Activated CD8-positive, alpha-beta T cell treated with anti-CD3 and anti-CD28 coated beads for 36 hours (primary cell): ENCODE measurements at regions of chr1 and their contacts with region 1.

Region 1: DNA sequence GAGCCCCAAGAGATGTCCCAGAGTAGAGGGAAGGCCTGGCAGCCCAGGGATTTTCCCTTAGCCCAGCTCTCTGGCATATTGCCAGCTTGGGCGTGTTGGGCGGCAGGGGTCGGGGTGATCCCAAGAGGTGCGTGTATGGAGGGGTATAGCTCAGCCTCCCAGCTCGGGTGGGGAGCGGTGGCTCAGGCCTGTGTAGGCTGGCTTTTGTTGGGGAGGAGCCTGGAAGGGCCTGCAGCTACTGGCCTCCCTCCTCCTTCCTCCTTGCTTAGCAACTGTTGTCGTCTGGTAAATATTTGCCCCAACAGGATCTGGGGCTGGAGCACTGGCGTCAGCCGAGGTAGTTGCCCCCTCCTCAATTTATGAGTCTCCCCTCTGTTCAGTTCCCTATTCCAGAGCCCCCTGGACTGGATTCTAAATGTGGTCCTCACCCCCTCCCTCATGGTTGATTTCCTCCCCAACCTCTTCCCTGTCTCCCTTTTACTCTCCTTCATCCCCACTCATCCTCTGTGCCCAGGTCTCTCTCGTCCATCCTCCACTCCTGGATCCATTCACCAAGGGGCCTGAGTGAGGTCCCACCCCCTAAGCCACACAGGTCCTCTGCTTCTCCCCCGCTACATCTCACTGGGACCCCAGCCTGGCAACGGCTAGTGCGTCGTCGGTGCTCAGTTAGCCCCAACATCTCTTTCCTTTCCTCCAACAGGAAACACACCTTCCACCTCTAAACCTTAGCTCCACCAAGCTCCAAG is 10.3 kb upstream of the LMNA start:
- DNase-seq: peak; percentile 51
- ATAC-seq: peak; percentile 9
- H3K4me3 Mint-ChIP-seq: no peak overlapping the region
- H3K27ac Mint-ChIP-seq: peak overlapping the region; percentile 76
- H3K4me1 Mint-ChIP-seq: peaks cover 64% of the 10 kb centered on the region
- H3K27me3 Mint-ChIP-seq: peaks cover 8% of the 10 kb centered on the region
- CTCF ChIP-seq: no peak

Region 2: GRCh38 chr1:156114101-156114916 is 10.1 kb after region 1 on chr1 and contains the start of gene LMNA:
- CTCF ChIA-PET with region 1: interaction called, 8 read pairs
- POLR2A ChIA-PET with region 1: interaction called, 94 read pairs
- intact Hi-C with region 1: no loop called
- DNase-seq: peak; percentile 92
- ATAC-seq: peak; percentile 89
- H3K4me3 Mint-ChIP-seq: peak within 1 kb of the TSS; percentile 85
- H3K27ac Mint-ChIP-seq: peak within 1 kb of the TSS; percentile 87
- H3K4me1 Mint-ChIP-seq: peaks cover 41% of the 10 kb centered on the region
- H3K27me3 Mint-ChIP-seq: peaks cover 8% of the 10 kb centered on the region
- CTCF ChIP-seq: no peak
- total RNA-seq, gene LMNA: 51.8 to 56.6 TPM